WTC11 (cell line): ENCODE measurements at regions of chr3 and their contacts with region 1.

Region 1: DNA sequence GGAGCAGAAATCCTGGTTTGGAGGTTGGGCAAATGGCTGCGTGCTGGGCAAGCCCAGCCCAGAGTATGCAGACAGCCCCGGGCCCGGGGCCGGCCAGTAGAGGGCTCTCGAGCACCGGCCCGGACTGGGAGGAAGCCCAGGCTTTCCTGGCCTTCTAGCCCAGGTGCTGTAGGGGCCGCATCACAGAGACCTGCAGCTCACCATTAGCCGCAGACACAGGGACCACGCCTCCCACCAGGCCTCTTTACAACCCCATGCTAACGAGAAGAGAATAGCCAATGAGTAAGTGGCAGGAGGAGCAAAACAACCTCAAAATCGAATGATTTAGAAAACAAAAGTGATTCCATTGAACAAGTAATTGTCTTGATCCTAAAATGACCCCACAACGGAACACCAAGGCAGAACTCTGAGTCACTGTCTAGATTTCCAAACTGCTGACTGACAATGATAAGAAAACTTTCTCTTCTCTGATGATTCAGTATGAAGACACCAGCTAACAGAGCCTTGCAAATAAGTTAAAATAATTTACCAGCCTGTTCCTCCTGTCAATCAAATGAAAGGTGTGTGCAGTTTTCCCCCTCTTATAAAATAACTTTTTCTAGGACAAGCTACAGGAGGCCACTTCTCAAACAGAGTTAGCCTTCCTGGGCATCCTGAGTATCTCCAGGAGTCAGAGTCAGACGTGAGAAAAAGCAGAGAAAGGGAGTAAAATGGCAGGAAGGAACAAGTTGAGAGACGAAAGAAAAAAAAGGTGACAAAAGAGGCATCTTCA is 102.2 kb downstream of the DGKG start:
- DNase-seq: peak; percentile 91
- ATAC-seq: peak; percentile 98
- H3K4me3 Mint-ChIP-seq: peak overlapping the region; percentile 41; the same call in 1 of the 2 replicates
- H3K27ac Mint-ChIP-seq: peak overlapping the region; percentile 32; the same call in 1 of the 2 replicates
- H3K4me1 Mint-ChIP-seq: peaks cover 27% of the 10 kb centered on the region
- H3K27me3 Mint-ChIP-seq: no peaks in the 10 kb centered on the region; the same call in 1 of the 2 replicates
- CTCF ChIP-seq: no peak; the same call in 1 of the 2 replicates

Region 2: GRCh38 chr3:185976977-185977678 is 282.7 kb before region 1 on chr3:
- CTCF ChIA-PET with region 1: interaction called, 20 read pairs
- POLR2A ChIA-PET with region 1: no interaction called
- DNase-seq: peak; percentile 90
- ATAC-seq: peak; percentile 94
- H3K4me3 Mint-ChIP-seq: no peak overlapping the region
- H3K27ac Mint-ChIP-seq: no peak overlapping the region
- H3K4me1 Mint-ChIP-seq: no peaks in the 10 kb centered on the region
- H3K27me3 Mint-ChIP-seq: no peaks in the 10 kb centered on the region
- CTCF ChIP-seq: peak; percentile 92

Region 3: DNA sequence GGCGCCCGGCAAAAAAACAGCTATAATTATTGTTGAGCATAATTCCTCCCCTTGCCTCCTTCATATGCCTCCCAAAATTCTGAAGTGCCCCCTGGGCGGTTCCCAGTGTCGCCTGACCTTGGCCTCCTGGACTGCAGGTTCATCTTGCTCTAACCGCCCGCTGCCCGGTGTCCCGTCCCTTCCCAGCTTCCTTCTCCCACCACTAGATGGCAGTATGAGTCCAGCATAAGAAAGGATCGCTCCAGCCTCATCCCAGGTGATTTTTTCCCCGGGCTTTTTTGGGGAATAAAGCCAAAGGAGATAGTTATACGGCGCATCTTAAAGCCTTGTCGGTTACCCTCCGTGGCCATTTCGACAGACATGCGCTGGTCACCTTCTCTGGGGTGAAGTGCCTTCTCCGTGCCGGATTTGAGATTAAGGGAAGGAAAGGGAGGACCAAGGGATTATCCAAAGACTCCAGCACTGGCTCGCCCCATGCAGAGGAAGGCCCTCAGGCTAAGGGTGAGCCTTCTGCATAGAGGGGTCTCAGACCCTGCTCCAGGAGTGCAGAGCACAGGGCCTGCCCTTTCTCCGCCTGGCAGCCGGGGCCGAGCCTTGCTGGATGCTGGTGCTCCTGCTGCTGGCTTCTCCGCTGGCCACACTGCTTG is 276.2 kb before region 1 on chr3:
- CTCF ChIA-PET with region 1: interaction called, 20 read pairs
- POLR2A ChIA-PET with region 1: interaction called, 3 read pairs
- DNase-seq: peak; percentile 82
- ATAC-seq: peak; percentile 89
- H3K4me3 Mint-ChIP-seq: peak overlapping the region; percentile 55
- H3K27ac Mint-ChIP-seq: no peak overlapping the region
- H3K4me1 Mint-ChIP-seq: peaks cover 3% of the 10 kb centered on the region; the same call in 1 of the 2 replicates
- H3K27me3 Mint-ChIP-seq: peaks cover 10% of the 10 kb centered on the region; the same call in 1 of the 2 replicates
- CTCF ChIP-seq: peak; percentile 88

Region 4: DNA sequence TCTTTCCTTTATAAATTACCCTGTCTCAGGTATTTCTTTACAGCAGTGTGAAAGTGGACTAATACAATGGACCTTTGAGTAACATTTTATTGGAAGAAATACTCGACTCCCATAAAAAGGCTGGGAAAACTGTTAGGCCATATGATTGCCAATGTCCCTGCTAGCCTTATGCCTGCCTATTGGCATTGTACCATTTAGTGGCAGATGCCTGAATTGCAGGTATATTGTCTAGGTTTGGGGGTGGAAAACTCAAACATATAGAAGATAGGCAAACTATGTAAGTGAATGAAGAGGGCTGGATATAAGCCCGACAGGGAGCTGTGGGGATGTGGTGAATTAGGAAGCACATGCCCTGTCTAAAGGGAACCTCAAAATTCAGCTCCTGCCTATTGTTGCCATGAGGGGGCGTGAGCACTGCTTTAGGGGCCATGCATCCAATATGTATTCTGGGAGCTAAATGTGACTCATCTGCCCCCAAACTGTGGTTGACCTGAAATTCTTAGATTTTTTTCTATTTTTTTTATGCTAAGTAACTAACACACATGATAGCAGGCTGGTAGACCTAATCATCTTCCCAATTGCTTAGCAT is 256.8 kb before region 1 on chr3:
- CTCF ChIA-PET with region 1: interaction called, 16 read pairs
- POLR2A ChIA-PET with region 1: no interaction called
- DNase-seq: peak; percentile 36
- ATAC-seq: peak; percentile 94
- H3K4me3 Mint-ChIP-seq: no peak overlapping the region
- H3K27ac Mint-ChIP-seq: no peak overlapping the region
- H3K4me1 Mint-ChIP-seq: no peaks in the 10 kb centered on the region
- H3K27me3 Mint-ChIP-seq: no peaks in the 10 kb centered on the region
- CTCF ChIP-seq: 0 out of 2 replicates have a peak, but pooled peaks have one; percentile 31

Region 5: GRCh38 chr3:186070996-186071395 is 188.8 kb before region 1 on chr3:
- CTCF ChIA-PET with region 1: interaction called, 10 read pairs
- POLR2A ChIA-PET with region 1: no interaction called
- DNase-seq: no peak
- ATAC-seq: no peak
- H3K4me3 Mint-ChIP-seq: no peak overlapping the region
- H3K27ac Mint-ChIP-seq: peak overlapping the region; percentile 34
- H3K4me1 Mint-ChIP-seq: no peaks in the 10 kb centered on the region
- H3K27me3 Mint-ChIP-seq: no peaks in the 10 kb centered on the region
- CTCF ChIP-seq: no peak

Region 6: DNA sequence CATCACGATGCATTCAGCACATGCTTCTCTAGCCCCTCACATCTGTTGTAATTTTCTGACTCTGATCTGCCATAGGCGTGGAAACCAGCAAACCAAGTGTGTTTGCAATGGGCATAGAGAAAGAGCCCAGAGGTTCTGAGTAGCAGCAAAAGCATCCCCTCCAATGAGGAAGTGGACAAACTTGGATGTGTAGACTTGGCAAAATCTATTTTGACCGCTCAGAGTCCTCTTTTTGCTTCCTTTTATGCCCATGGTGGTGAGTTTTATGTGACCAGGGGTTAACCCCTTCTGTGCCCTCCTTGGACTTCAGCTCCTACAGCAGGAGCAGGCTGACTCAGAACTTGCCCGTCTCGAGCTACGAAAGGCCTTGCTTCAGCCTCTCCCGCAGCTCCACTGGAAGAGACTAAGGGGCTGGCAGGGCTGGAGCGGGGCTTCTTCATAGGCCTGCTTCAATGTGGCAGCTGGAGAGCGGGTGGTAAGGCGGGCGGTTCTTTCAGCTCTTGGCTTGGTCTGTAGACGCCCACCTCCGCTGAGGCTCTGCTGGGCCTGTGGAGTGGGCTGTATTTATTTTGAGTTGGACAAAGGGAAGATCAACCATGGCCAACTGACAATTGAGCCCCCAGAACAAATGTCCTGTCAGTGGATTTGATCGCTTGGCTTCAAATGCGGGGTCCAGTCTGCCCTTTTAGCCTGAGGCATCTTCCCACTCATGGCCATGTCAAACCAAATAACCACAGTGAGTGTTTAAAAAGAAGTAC is 144.4 kb before region 1 on chr3:
- CTCF ChIA-PET with region 1: no interaction called
- POLR2A ChIA-PET with region 1: no interaction called
- DNase-seq: no peak
- ATAC-seq: no peak
- H3K4me3 Mint-ChIP-seq: no peak overlapping the region
- H3K27ac Mint-ChIP-seq: no peak overlapping the region
- H3K4me1 Mint-ChIP-seq: peaks cover 24% of the 10 kb centered on the region
- H3K27me3 Mint-ChIP-seq: peaks cover 80% of the 10 kb centered on the region
- CTCF ChIP-seq: no peak

Region 7: DNA sequence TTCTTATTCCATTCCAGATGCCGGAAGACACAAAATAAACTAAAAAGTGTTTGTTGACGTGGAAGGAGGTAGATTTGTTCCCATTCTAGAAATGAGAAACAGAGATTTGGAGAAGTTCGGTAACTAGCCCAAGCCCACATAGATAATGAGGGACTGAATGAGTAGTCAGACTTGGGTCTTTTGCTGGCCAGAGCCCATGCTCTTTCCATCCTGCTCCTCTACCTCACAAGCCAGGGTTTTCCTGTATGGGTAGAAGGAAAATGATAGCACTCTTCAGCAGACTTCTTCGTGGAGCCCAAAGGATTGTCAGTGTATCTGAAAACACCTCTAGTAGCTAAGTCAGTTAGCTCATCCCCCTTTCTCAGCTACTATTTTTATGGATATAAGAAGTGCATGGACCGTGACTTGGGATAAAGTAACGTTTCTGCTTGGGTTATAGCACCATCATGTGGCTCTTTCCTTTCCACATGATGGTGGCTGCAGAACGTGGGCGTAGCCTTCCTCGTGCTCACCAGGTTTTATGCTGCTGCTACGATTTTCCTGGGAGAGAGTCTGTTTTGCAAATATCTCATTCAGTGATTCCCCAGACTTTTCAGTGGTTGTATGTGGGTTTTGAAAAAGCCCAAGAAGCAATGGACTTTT is 17.6 kb after region 1 on chr3:
- CTCF ChIA-PET with region 1: interaction called, 87 read pairs
- POLR2A ChIA-PET with region 1: no interaction called
- DNase-seq: no peak
- ATAC-seq: peak; percentile 98
- H3K4me3 Mint-ChIP-seq: no peak overlapping the region
- H3K27ac Mint-ChIP-seq: no peak overlapping the region
- H3K4me1 Mint-ChIP-seq: peaks cover 11% of the 10 kb centered on the region
- H3K27me3 Mint-ChIP-seq: no peaks in the 10 kb centered on the region; the same call in 1 of the 2 replicates
- CTCF ChIP-seq: no peak

Region 8: GRCh38 chr3:186534113-186534669 is 274.4 kb after region 1 on chr3:
- CTCF ChIA-PET with region 1: interaction called, 117 read pairs
- POLR2A ChIA-PET with region 1: no interaction called
- DNase-seq: no peak
- ATAC-seq: no peak
- H3K4me3 Mint-ChIP-seq: no peak overlapping the region
- H3K27ac Mint-ChIP-seq: no peak overlapping the region
- H3K4me1 Mint-ChIP-seq: peaks cover 17% of the 10 kb centered on the region
- H3K27me3 Mint-ChIP-seq: no peaks in the 10 kb centered on the region
- CTCF ChIP-seq: no peak